HCT116 (cell line): ENCODE measurements at regions of chr9 and their contacts with region 1.

Region 1: DNA sequence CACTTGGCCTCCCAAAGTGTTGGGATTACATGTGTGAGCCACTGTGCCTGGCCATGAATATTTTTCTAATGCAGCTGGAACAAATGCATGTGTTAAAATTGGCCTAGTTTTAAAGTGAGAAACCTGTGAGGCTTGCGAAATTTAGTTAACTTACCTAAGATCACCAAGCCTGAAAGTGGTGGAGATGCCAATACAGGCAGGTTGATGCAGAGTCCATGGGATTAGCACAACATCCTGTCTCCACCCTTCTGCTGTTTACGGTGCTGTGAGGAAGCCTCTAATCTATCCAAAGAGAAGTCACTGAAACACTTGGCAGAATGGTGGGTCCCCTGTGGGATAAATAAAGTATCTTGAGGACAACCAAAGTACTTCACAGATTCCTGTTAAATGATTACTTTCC is 98.2 kb downstream of the PCSK5 start:
- DNase-seq: no peak
- ATAC-seq: no peak
- H3K4me3 ChIP-seq: no peak overlapping the region
- H3K27ac ChIP-seq: no peak overlapping the region
- H3K4me1 ChIP-seq: peaks cover 0 to 8% of the 10 kb centered on the region in 2 experiments; a peak in 2 of 4 replicates
- H3K27me3 ChIP-seq: no peaks in the 10 kb centered on the region
- CTCF ChIP-seq: no peak
- POLR2A ChIP-seq: no peak
- RAD21 ChIP-seq: no peak

Region 2: GRCh38 chr9:76181020-76181641 is 192.5 kb after region 1 on chr9:
- CTCF ChIA-PET with region 1: no interaction called
- POLR2A ChIA-PET with region 1: no interaction called
- RAD21 ChIA-PET with region 1: no interaction called
- intact Hi-C with region 1: loop called (anchors 10 kb)
- DNase-seq: peak; percentile 26
- ATAC-seq: peak; percentile 64; the same call in 1 of the 2 replicates
- H3K4me3 ChIP-seq: no peak overlapping the region
- H3K27ac ChIP-seq: no peak overlapping the region
- H3K4me1 ChIP-seq: peaks cover 8 to 15% of the 10 kb centered on the region in 2 experiments; a peak in 3 of 4 replicates
- H3K27me3 ChIP-seq: no peaks in the 10 kb centered on the region
- CTCF ChIP-seq: no peak
- POLR2A ChIP-seq: no peak
- RAD21 ChIP-seq: no peak

Region 3: GRCh38 chr9:76297721-76298239 is 309.1 kb after region 1 on chr9:
- CTCF ChIA-PET with region 1: no interaction called
- POLR2A ChIA-PET with region 1: no interaction called
- RAD21 ChIA-PET with region 1: no interaction called
- intact Hi-C with region 1: loop called (anchors 10 kb)
- DNase-seq: no peak
- ATAC-seq: no peak
- H3K4me3 ChIP-seq: no peak overlapping the region
- H3K27ac ChIP-seq: no peak overlapping the region
- H3K4me1 ChIP-seq: no peaks in the 10 kb centered on the region
- H3K27me3 ChIP-seq: 0 out of 2 replicates have a peak, but pooled peaks cover 3% of the 10 kb centered on the region
- CTCF ChIP-seq: no peak
- POLR2A ChIP-seq: no peak
- RAD21 ChIP-seq: no peak

Region 4: DNA sequence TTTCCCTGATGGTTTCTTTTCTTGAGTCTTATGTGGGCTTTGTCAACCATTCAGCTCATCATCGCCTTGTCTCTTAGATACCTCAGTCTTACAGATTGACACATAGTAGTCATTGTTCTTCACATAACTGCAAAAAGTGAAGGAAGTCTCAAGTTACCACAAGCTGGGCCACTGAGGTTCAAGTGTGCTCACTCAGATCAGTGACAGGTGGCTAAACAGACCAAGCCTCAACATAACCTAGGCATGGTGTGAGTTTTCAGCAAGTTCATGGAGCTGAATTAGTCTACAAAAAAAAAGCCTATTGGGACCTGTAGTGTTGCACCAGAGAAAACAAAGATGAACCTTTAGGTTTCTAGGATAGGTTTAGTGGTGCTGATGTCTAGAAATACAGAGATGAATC is 347.4 kb after region 1 on chr9:
- CTCF ChIA-PET with region 1: no interaction called
- POLR2A ChIA-PET with region 1: no interaction called
- RAD21 ChIA-PET with region 1: no interaction called
- intact Hi-C with region 1: no loop called
- DNase-seq: no peak
- ATAC-seq: no peak
- H3K4me3 ChIP-seq: no peak overlapping the region
- H3K27ac ChIP-seq: no peak overlapping the region
- H3K4me1 ChIP-seq: no peaks in the 10 kb centered on the region
- H3K27me3 ChIP-seq: no peaks in the 10 kb centered on the region
- CTCF ChIP-seq: no peak
- POLR2A ChIP-seq: no peak
- RAD21 ChIP-seq: no peak